Stomach (tissue), 19 donors: ENCODE measurements at regions of chr22 and their contacts with region 1.

Region 1: DNA sequence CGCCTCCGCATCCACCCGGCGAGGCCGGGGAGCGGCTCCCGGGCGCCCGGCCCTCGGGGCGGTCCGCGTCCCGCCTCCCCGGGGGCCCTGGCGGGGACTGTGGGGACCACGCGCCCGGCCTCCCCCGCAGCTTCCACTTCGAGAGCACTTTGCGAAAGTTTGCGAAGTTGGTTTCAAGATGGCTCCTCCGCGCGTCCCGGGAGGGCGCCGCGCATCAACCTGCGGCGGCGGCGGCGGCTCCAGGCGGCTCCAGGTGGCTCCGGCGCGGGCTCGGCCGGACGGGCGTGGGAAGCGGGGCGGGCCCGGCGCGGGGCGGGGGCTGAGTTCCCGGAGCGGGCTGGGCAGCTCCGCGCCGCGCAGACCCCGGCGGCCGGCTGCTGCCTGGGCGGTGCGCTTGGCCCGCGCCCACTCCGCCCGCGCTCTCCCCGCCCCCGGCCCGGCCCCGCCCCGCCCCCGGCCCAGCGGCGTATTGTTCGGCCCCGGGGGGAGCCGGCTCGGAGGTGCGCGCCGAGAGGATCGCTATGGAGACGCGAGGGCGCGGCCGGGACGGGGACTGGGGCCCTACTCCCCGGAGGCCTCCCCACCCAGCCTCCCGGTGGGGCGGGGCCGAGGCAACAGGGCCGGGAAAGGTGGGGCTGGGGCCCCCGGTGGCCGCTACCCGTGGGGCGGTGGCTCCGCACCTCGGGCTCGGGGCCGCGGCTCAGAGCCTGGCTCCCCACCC is at the start of gene CELSR1:
- DNase-seq: peak; percentile 73 to 91
- H3K4me3 ChIP-seq: peak within 1 kb of the TSS; percentile 46 to 70 (median 58)
- H3K27ac ChIP-seq: peak within 1 kb of the TSS; percentile 52 to 80 (median 77)
- H3K4me1 ChIP-seq: peaks cover 25 to 63% (median 38%) of the 10 kb centered on the region in 4 donors
- H3K27me3 ChIP-seq: peaks cover 0 to 72% (median 22%) of the 10 kb centered on the region in 3 donors
- CTCF ChIP-seq: no peak
- EP300 ChIP-seq: no peak
- POLR2A ChIP-seq: no peak
- total RNA-seq, gene CELSR1: 0.29 to 78.2 (median 29.8) TPM

Region 2: GRCh38 chr22:46373921-46374662 is 163.3 kb before region 1 on chr22:
- intact Hi-C with region 1: loop called (anchors 5 kb)
- DNase-seq: peak in 1 of 2 donors; percentile 76
- H3K4me3 ChIP-seq: no peak overlapping the region
- H3K27ac ChIP-seq: peak overlapping the region; percentile 73 to 84 (median 82)
- H3K4me1 ChIP-seq: peaks cover 43 to 71% (median 61%) of the 10 kb centered on the region in 4 donors
- H3K27me3 ChIP-seq: peaks cover 0 to 24% (median 0%) of the 10 kb centered on the region in 3 donors
- CTCF ChIP-seq: no peak
- EP300 ChIP-seq: no peak
- POLR2A ChIP-seq: no peak

Region 3: DNA sequence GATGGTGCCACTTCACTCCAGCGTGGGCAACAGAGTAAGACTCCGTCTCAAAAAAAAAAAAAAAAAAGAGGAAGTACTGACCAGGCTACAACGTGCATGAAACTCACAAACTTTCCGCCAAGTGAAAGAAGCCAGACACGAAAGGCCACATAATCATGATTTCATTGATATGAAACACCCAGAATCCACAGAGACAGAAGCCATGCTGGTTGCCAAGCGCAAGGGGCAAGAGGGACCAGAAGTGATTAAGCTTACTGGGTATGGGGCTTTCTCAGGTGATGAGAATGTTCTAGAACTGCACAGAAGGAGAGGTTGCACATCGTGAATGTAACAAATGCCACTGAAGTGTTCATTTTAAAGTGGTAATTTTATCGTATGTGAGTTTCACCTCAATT is 60.8 kb before region 1 on chr22:
- intact Hi-C with region 1: no loop called
- DNase-seq: no peak
- H3K4me3 ChIP-seq: no peak overlapping the region
- H3K27ac ChIP-seq: no peak overlapping the region
- H3K4me1 ChIP-seq: peaks cover 0 to 1% (median 0%) of the 10 kb centered on the region in 4 donors
- H3K27me3 ChIP-seq: peaks cover 0 to 18% (median 0%) of the 10 kb centered on the region in 3 donors
- CTCF ChIP-seq: no peak
- EP300 ChIP-seq: no peak
- POLR2A ChIP-seq: no peak